Activated naive CD8-positive, alpha-beta T cell treated with anti-CD3 and anti-CD28 coated beads, Interleukin-2, amount 10 ng/mL, durations not matched to agents 7 days and 5 days (primary cell): ENCODE measurements at regions of chr17 and their contacts with region 1.

Region 1: DNA sequence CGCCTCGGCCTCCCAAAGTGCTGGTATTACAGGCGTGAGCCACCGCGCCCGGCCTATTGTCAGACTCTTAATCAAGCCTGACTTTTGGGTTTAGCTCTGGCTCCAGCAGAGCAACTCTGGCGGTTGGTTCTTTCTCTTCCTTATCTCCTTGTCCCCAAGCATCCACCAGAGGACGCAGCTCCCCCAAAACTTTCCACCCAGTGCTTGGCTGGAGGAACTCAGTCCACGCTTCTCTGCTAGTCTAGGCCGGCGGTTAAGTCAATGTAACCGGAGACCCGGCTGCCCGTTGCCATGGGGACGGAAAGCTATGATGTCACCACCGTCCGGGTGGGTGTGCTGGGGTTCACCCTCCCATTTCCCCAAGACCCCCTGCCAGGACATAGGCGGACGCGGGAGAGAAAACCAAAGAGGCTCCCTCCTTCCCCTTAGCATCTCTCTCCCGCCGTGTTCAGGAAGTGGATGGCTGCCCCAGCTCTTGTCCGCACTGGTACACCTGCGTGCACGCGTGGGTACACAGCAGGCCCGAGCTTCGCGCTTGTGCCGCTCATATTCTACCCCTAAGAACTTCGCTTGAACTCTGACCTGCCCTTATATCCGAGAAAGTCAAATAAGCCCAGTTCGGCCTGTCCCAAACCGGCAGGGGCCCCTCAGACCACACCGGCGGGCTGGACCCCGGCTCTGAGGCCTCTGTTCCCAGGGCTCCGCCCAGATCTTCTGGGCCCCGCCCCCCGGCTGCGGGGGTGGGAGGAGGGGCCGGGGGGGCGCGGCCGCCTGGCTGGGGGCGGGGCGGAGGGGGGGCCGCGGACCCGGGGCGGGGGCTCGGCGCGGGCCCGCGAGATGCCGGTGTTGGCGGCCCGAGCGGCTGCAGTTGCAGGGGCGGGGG is at the start of gene RND2:
- DNase-seq: peak; percentile 73
- ATAC-seq: peak; percentile 61
- H3K4me3 Mint-ChIP-seq: peak within 1 kb of the TSS; percentile 87
- H3K27ac Mint-ChIP-seq: peak within 1 kb of the TSS; percentile 43
- H3K4me1 Mint-ChIP-seq: peaks cover 15% of the 10 kb centered on the region
- H3K27me3 Mint-ChIP-seq: peaks cover 28% of the 10 kb centered on the region
- total RNA-seq, gene RND2: 0.14 TPM in 1 of 2 experiments, not detected in the other

Region 2: DNA sequence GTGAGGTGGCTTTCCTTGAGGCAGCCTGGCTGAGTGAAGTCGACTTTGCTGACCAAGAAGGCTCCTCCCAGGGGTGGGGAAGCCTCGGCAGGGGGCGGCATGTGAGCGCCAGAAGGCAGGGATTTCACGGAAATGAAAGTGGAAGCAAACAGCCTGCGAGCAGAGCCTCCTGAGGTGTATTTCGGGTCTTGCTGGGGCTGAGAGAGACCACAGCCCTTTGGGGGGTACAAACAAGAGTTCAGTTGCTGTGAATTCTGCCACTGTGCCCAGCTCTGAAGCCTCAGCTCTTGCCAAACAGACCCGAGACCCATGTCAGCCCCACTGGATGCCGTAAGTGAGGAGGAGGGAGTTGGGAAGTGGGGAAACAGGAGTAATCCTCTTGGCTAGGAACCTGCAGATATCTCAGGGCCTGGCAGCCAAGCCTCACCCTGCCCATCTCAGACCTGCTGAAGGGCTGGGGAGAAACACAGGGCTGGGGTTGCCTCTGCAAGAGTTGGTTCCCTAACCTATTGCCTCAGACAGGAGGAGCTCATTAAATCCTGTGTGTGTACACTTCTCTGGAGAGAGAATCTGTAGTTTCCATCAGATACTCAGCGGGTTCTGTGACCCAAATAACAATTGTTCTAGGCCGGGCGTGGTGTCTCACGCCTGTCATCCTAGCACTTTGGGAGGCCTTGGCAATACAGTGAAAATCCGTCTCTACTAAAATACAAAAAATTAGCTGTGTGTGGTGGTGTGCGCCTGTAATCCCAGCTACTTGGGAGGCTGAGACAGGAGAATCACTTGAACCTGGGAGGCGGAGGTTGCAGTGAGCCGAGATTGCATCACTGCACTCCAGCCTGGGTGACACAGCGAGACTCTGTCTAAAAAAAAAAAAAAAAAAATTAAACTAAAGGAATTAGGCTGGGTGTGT is 17.8 kb before region 1 on chr17 and contains the start of gene IFI35:
- POLR2A ChIA-PET with region 1: interaction called, 12 read pairs
- DNase-seq: peak; percentile 83
- ATAC-seq: peak; percentile 98
- H3K4me3 Mint-ChIP-seq: peak within 1 kb of the TSS; percentile 100
- H3K27ac Mint-ChIP-seq: peak within 1 kb of the TSS; percentile 100
- H3K4me1 Mint-ChIP-seq: peaks cover 23% of the 10 kb centered on the region
- H3K27me3 Mint-ChIP-seq: no peaks in the 10 kb centered on the region
- total RNA-seq, gene IFI35: 92.7 to 99.2 TPM